IMR-90 (cell line): ENCODE measurements at regions of chr1 and their contacts with region 1.

Region 1: GRCh38 chr1:50582346-50582745 is 159.1 kb upstream of the DMRTA2 start:
- DNase-seq: no peak
- ATAC-seq: no peak
- H3K4me3 ChIP-seq: no peak overlapping the region
- H3K27ac ChIP-seq: no peak overlapping the region
- H3K4me1 ChIP-seq: no peaks in the 10 kb centered on the region
- H3K27me3 ChIP-seq: no peaks in the 10 kb centered on the region
- CTCF ChIP-seq: no peak
- POLR2A ChIP-seq: no peak
- RAD21 ChIP-seq: no peak

Region 2: GRCh38 chr1:50450861-50451653 is 131.3 kb before region 1 on chr1:
- CTCF ChIA-PET with region 1: no interaction called
- POLR2A ChIA-PET with region 1: interaction called, 12 read pairs
- dilution Hi-C with region 1: no loop called
- in situ Hi-C with region 1: no loop called
- intact Hi-C with region 1: no loop called
- DNase-seq: no peak
- ATAC-seq: no peak
- H3K4me3 ChIP-seq: no peak overlapping the region
- H3K27ac ChIP-seq: no peak overlapping the region
- H3K4me1 ChIP-seq: no peaks in the 10 kb centered on the region
- H3K27me3 ChIP-seq: no peaks in the 10 kb centered on the region
- CTCF ChIP-seq: no peak
- POLR2A ChIP-seq: no peak
- RAD21 ChIP-seq: no peak